PC-3 (cell line): ENCODE measurements at regions of chr15 and their contacts with region 1.

Region 1: DNA sequence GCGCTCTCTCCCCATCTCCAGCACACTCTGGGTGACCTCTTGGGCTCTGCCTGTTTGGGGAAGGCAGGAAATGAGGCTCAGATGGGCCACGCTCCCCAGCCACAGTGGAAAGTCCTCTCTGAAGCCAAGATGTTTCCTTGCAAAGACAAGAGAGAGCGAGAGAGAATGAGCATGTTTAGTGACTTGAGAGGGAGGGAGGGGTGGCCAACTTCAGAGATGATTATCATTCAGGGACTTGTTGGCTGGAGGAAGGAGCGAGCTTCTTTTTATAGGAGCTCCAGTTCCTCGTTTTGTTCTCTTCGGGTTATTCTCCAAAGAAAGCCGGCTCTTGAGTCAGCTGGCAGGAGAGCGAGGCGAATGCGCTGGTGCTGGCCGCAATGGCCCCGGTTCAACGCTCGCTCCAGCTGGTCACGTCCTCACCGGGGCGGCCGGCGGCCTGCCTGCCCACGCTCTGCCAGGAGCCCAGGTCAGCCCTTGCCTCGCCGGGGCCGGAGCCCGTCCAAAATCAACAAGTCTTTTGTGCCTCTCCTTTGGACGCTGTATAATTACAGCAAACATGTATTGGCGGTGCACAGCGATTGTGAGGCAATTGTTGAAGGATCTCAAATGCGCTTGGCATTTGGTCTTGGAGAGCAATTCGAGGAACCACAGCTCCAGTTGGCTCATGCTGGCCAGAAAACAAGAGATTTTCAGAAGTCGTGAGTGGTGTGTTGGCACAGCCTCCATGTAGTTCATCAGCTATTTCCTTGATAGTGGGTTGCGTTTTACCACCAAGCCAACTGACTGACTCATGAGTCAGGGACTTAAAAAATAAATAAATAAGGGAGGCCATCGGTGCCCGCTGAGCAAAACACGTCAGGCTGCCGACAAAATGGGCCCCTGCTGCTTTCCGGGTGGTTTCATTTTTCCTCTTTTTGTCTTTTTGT is 288.6 kb downstream of the UACA start:
- DNase-seq: peak; percentile 94
- ATAC-seq: peak; percentile 85
- H3K4me3 ChIP-seq: peak overlapping the region; percentile 55
- H3K27ac ChIP-seq: peak overlapping the region; percentile 93
- H3K4me1 ChIP-seq: peaks cover 30% of the 10 kb centered on the region
- H3K27me3 ChIP-seq: no peaks in the 10 kb centered on the region
- CTCF ChIP-seq: no peak

Region 2: GRCh38 chr15:70339681-70340493 is 134.8 kb before region 1 on chr15:
- CTCF ChIA-PET with region 1: no interaction called
- POLR2A ChIA-PET with region 1: no interaction called
- intact Hi-C with region 1: no loop called
- DNase-seq: no peak
- ATAC-seq: no peak
- H3K4me3 ChIP-seq: no peak overlapping the region
- H3K27ac ChIP-seq: no peak overlapping the region
- H3K4me1 ChIP-seq: no peaks in the 10 kb centered on the region
- H3K27me3 ChIP-seq: no peaks in the 10 kb centered on the region
- CTCF ChIP-seq: no peak

Region 3: DNA sequence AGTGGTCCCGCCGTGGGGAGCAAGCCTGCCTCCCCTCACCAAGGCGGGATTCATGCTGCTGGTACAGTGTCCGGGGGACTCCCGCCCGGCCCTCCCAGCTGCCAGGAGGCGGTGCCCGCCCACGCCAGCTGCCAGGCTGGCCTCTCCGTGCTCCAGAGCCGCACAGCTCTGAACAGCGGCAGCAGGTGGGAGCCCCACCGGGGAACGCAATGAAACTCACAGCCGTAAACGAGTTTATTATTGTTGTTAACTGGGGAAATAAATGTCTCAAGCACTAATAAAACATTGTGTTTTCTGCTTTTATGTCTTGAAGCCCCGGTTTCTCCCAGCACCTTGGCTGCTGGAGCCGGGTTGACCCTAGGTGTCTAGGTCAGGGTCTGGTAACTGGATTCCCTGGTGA is 59.3 kb before region 1 on chr15:
- CTCF ChIA-PET with region 1: no interaction called
- POLR2A ChIA-PET with region 1: no interaction called
- intact Hi-C with region 1: no loop called
- DNase-seq: no peak
- ATAC-seq: no peak
- H3K4me3 ChIP-seq: no peak overlapping the region
- H3K27ac ChIP-seq: no peak overlapping the region
- H3K4me1 ChIP-seq: no peaks in the 10 kb centered on the region
- H3K27me3 ChIP-seq: peaks cover 24% of the 10 kb centered on the region
- CTCF ChIP-seq: no peak

Region 4: DNA sequence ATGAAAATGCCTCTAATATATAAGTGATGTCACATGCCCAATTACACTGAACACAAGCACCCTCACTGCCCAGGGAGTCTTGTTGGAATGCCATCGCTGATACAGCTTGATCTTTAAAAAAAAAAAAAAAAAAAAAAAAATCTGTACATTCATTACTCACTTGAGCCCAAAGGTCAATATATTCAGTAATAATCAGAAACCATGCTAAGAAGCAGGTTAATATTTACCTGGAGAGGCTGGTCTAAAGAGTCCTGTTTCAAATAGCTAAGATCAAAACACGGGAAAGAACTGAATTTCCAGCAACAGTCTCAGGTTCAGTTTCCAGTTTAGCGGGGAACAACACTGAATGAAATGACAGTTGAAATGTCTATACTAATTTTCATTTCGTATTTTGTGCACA is 178.7 kb after region 1 on chr15:
- CTCF ChIA-PET with region 1: no interaction called
- POLR2A ChIA-PET with region 1: no interaction called
- intact Hi-C with region 1: no loop called
- DNase-seq: no peak
- ATAC-seq: no peak
- H3K4me3 ChIP-seq: no peak overlapping the region
- H3K27ac ChIP-seq: no peak overlapping the region
- H3K4me1 ChIP-seq: no peaks in the 10 kb centered on the region
- H3K27me3 ChIP-seq: no peaks in the 10 kb centered on the region
- CTCF ChIP-seq: no peak

Region 5: DNA sequence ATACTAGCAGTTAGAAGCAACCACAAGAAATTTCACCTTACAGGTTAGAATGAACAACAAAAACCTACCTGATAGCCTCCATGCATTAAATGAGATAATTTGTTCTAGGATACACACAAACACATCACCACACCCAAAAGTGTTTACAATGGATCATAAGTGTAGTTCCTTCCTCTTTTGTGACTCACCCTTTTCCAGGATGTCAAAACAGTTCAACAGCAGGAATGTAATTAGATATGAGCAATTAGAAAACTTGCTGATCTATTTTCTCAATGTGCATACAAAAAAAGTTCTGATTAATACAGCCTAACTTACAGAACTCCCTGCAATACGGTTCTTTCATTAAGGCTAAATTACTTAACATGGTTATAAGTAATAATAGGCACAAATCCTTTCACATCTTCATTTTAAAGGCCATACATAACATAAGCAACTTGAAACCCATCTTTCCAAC is 267.1 kb after region 1 on chr15:
- CTCF ChIA-PET with region 1: no interaction called
- POLR2A ChIA-PET with region 1: interaction called, 13 read pairs
- intact Hi-C with region 1: no loop called
- DNase-seq: peak; percentile 77
- ATAC-seq: peak; percentile 84
- H3K4me3 ChIP-seq: 0 out of 2 replicates have a peak overlapping the region, but pooled peaks have one; percentile 11
- H3K27ac ChIP-seq: peak overlapping the region; percentile 69
- H3K4me1 ChIP-seq: peaks cover 26% of the 10 kb centered on the region
- H3K27me3 ChIP-seq: no peaks in the 10 kb centered on the region
- CTCF ChIP-seq: no peak